SK-N-SH (cell line): ENCODE measurements at regions of chr3 and their contacts with region 1.

Region 1: GRCh38 chr3:37855363-37855970 is 6.2 kb upstream of the CTDSPL start:
- DNase-seq: peak; percentile 79
- H3K4me3 ChIP-seq: no peak overlapping the region; a peak in 1 of 4 replicates
- H3K27ac ChIP-seq: no peak overlapping the region
- H3K4me1 ChIP-seq: peaks cover 6 to 10% of the 10 kb centered on the region in 2 experiments; a peak in 3 of 4 replicates
- H3K27me3 ChIP-seq: no peaks in the 10 kb centered on the region
- CTCF ChIP-seq: peak; percentile 94
- EP300 ChIP-seq: no peak
- RAD21 ChIP-seq: peak; percentile 97

Region 2: GRCh38 chr3:37787153-37787867 is 68.2 kb before region 1 on chr3:
- CTCF ChIA-PET with region 1: no interaction called
- POLR2A ChIA-PET with region 1: no interaction called
- DNase-seq: no peak
- H3K4me3 ChIP-seq: no peak overlapping the region
- H3K27ac ChIP-seq: no peak overlapping the region; a peak in 1 of 4 replicates
- H3K4me1 ChIP-seq: peaks cover 0 to 12% of the 10 kb centered on the region in 2 experiments; a peak in 3 of 4 replicates
- H3K27me3 ChIP-seq: no peaks in the 10 kb centered on the region
- CTCF ChIP-seq: no peak
- EP300 ChIP-seq: no peak
- RAD21 ChIP-seq: no peak

Region 3: GRCh38 chr3:37816271-37816670 is 39.2 kb before region 1 on chr3:
- CTCF ChIA-PET with region 1: interaction called, 18 read pairs
- POLR2A ChIA-PET with region 1: no interaction called
- DNase-seq: no peak
- H3K4me3 ChIP-seq: no peak overlapping the region
- H3K27ac ChIP-seq: no peak overlapping the region
- H3K4me1 ChIP-seq: peaks cover 0 to 29% of the 10 kb centered on the region in 2 experiments; a peak in 2 of 4 replicates
- H3K27me3 ChIP-seq: no peaks in the 10 kb centered on the region
- CTCF ChIP-seq: no peak
- EP300 ChIP-seq: no peak
- RAD21 ChIP-seq: no peak

Region 4: GRCh38 chr3:37833302-37834186 is 21.9 kb before region 1 on chr3:
- CTCF ChIA-PET with region 1: interaction called, 21 read pairs
- POLR2A ChIA-PET with region 1: interaction called, 3 read pairs
- DNase-seq: peak; percentile 22
- H3K4me3 ChIP-seq: no peak overlapping the region
- H3K27ac ChIP-seq: no peak overlapping the region
- H3K4me1 ChIP-seq: no peaks in the 10 kb centered on the region
- H3K27me3 ChIP-seq: no peaks in the 10 kb centered on the region
- CTCF ChIP-seq: no peak
- EP300 ChIP-seq: no peak
- RAD21 ChIP-seq: peak; percentile 47

Region 5: GRCh38 chr3:37956723-37957528 is 101.5 kb after region 1 on chr3:
- CTCF ChIA-PET with region 1: interaction called, 13 read pairs
- POLR2A ChIA-PET with region 1: no interaction called
- DNase-seq: no peak
- H3K4me3 ChIP-seq: no peak overlapping the region
- H3K27ac ChIP-seq: no peak overlapping the region
- H3K4me1 ChIP-seq: peaks cover 6 to 9% of the 10 kb centered on the region in 2 experiments; a peak in 3 of 4 replicates
- H3K27me3 ChIP-seq: no peaks in the 10 kb centered on the region
- CTCF ChIP-seq: no peak
- EP300 ChIP-seq: no peak
- RAD21 ChIP-seq: no peak

Region 6: GRCh38 chr3:37979541-37980461 is 124.3 kb after region 1 on chr3:
- CTCF ChIA-PET with region 1: interaction called, 33 read pairs
- POLR2A ChIA-PET with region 1: no interaction called
- DNase-seq: no peak
- H3K4me3 ChIP-seq: no peak overlapping the region
- H3K27ac ChIP-seq: no peak overlapping the region
- H3K4me1 ChIP-seq: no peaks in the 10 kb centered on the region; a peak in 1 of 4 replicates
- H3K27me3 ChIP-seq: no peaks in the 10 kb centered on the region
- CTCF ChIP-seq: no peak
- EP300 ChIP-seq: no peak
- RAD21 ChIP-seq: no peak

Region 7: DNA sequence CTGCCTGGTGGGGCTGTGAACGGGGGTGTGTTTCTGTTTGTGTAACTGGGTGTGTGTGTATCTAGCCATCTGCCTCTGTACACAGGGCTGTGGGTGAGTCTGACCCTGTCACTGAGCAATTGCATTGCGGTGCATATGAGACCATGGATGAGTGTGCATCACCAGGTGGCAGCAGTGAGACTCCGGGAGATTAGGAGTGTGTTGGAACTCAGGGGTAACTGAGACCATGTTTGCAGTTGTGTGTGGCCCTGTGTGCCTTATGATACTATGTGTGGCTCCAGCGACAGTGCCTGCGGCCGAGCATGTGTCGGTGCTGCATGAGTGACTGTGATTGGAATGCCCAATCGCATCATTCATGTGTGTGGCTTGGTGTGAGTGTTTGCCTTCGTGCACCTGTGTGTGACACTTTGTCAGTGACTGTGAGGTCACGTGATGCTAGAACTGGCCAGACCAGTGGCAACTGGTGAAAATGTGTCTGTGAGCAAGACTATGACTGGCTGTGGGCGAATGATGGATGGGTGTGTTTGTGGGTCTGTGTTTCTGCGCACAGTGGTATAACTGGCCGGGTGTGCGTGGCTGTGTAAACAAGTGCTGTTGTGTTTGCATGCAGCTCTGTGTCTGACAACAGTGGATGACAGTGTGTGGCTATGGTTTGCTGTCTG is 149.1 kb after region 1 on chr3:
- CTCF ChIA-PET with region 1: interaction called, 77 read pairs
- POLR2A ChIA-PET with region 1: no interaction called
- DNase-seq: peak; percentile 71
- H3K4me3 ChIP-seq: no peak overlapping the region; a peak in 1 of 4 replicates
- H3K27ac ChIP-seq: no peak overlapping the region
- H3K4me1 ChIP-seq: no peaks in the 10 kb centered on the region; a peak in 1 of 4 replicates
- H3K27me3 ChIP-seq: no peaks in the 10 kb centered on the region
- CTCF ChIP-seq: peak; percentile 62
- EP300 ChIP-seq: no peak
- RAD21 ChIP-seq: peak; percentile 64